Panc1 (cell line): ENCODE measurements at regions of chr1 and their contacts with region 1.

Region 1: DNA sequence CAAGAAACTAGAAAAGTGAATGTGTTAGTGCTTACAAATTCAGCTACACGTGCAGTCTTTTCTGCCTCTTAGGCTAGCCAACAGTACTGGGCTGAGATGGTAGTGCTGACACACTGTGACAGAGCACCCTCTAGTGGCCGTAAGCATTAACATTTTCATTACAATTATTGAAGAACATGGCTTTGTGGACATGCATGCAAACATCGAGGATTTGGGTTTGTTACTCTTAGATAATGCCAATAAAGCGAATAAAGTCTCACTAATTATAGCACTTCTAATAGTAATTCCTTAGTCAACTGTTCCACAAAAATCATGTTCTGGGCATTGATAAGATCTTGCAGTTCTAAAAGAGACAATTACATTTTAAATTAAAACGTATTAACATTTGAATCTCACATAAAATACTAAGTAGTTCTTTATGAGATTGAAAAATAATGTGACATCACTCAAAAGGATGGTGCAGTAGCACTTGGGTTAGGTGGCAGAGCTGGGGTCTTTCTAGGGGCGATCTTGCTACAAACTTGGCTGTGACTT is 47.1 kb downstream of the MYSM1 start:
- DNase-seq: peak; percentile 42
- ATAC-seq: peak; percentile 89
- H3K4me3 ChIP-seq: no peak overlapping the region
- H3K27ac ChIP-seq: no peak overlapping the region
- H3K4me1 ChIP-seq: no peaks in the 10 kb centered on the region
- H3K27me3 ChIP-seq: no peaks in the 10 kb centered on the region
- CTCF ChIP-seq: peak; percentile 87

Region 2: DNA sequence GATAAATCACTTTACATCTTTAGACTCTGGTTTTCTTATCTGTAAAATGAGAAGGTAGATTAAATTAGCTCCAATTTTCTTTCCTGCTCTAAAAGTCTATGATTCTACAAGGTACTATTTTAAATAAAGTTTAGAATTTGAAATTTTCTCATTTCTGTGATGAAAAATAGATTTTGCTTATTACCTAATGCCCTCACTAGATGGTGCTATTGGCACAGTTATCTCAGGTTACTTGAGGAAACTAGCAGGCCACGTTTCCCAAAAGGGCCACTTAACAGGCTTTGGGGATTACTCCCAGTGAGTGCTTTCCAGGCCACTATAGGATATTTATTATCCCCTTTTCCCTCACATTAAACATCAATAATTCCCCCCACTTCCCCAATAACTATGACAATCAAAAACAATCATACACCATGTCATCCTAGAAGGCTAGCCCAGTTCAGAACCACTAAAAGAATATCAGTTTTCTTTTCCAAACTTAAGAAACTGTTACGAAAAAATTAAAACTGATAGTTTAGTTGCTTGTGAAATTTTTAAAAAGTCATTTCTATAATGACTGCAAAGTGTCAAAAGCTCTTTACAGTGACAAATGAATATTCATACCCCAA is 136.8 kb before region 1 on chr1:
- CTCF ChIA-PET with region 1: no interaction called
- POLR2A ChIA-PET with region 1: no interaction called
- in situ Hi-C with region 1: no loop called
- intact Hi-C with region 1: loop called (anchors 2 kb)
- DNase-seq: peak; percentile 20
- ATAC-seq: peak; percentile 48; the same call in 1 of the 2 replicates
- H3K4me3 ChIP-seq: no peak overlapping the region
- H3K27ac ChIP-seq: no peak overlapping the region
- H3K4me1 ChIP-seq: no peaks in the 10 kb centered on the region
- H3K27me3 ChIP-seq: no peaks in the 10 kb centered on the region
- CTCF ChIP-seq: peak; percentile 71